ENCODE measurements at regions of chr10 and their contacts with region 1.

Region 1: GRCh38 chr10:47371629-47372485 is 12.2 kb downstream of the ZNF488 start:
- DNase-seq: peak; percentile 6
- H3K4me3 Mint-ChIP-seq: no peak overlapping the region
- H3K27ac Mint-ChIP-seq: no peak overlapping the region
- H3K4me1 Mint-ChIP-seq: peaks cover 5% of the 10 kb centered on the region
- H3K27me3 Mint-ChIP-seq: peaks cover 12% of the 10 kb centered on the region

Region 2: GRCh38 chr10:47214520-47214919 is 157.3 kb before region 1 on chr10:
- CTCF ChIA-PET with region 1: no interaction called
- POLR2A ChIA-PET with region 1: no interaction called
- intact Hi-C with region 1: no loop called
- DNase-seq: no peak
- H3K4me3 Mint-ChIP-seq: no peak overlapping the region
- H3K27ac Mint-ChIP-seq: no peak overlapping the region
- H3K4me1 Mint-ChIP-seq: peaks cover 47% of the 10 kb centered on the region
- H3K27me3 Mint-ChIP-seq: no peaks in the 10 kb centered on the region

Region 3: DNA sequence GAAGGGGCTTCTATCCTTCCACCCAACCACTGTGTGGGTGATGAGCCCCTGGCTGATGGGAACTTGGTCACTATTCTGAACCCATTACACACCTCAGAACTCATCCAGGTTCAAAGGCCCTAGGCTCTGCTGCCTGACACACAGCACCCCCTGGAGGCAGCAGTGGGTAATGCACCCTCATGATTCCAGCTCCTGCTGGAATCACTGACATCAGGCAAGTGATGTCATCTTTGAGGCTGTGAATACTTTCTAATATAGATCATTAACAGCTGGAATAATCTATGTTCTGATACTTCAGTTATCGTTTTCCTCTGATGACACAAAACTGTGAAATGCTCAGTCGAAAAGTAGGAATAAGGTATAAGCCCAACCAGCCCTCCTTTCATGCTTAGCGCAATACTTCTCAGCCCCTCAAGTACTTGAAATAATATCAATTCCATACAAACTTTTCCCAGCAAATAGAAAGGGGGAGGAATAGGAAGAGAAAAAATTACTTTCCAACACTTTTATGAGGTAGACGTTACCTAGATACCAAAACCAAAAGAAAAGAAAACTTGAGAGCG is 31.2 kb before region 1 on chr10:
- CTCF ChIA-PET with region 1: interaction called, 11 read pairs
- POLR2A ChIA-PET with region 1: no interaction called
- intact Hi-C with region 1: no loop called
- DNase-seq: peak; percentile 79
- H3K4me3 Mint-ChIP-seq: no peak overlapping the region
- H3K27ac Mint-ChIP-seq: no peak overlapping the region
- H3K4me1 Mint-ChIP-seq: no peaks in the 10 kb centered on the region
- H3K27me3 Mint-ChIP-seq: peaks cover 5% of the 10 kb centered on the region

Region 4: DNA sequence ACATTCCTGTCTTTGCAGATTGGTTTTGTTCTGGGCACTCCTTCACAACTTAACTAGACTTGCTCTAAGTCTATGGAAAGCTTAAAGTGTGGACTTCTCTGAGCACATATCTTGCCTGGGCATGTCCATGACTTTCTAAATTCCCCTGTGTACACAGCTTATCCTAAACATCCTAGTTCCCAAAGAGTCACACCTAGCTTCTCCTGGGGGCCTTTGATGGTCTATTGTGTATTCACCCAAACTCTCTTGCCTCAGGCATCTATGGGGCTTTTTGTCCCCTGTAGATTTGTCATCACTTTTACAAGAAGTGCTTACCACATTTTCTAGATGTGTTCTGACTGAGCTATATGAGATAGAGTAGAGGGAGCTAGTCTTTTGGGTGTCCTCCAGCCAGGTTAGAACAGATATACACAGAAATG is 24.5 kb after region 1 on chr10:
- CTCF ChIA-PET with region 1: no interaction called
- POLR2A ChIA-PET with region 1: no interaction called
- intact Hi-C with region 1: no loop called
- DNase-seq: no peak
- H3K4me3 Mint-ChIP-seq: no peak overlapping the region
- H3K27ac Mint-ChIP-seq: no peak overlapping the region
- H3K4me1 Mint-ChIP-seq: no peaks in the 10 kb centered on the region
- H3K27me3 Mint-ChIP-seq: peaks cover 31% of the 10 kb centered on the region